ENCODE measurements at regions of chr20 and their contacts with region 1.

Region 1: GRCh38 chr20:34676642-34677373 is at the start of gene PIGU:
- DNase-seq: peak; percentile 97
- H3K4me3 Mint-ChIP-seq: peak within 1 kb of the TSS; percentile 97
- H3K27ac Mint-ChIP-seq: peak within 1 kb of the TSS; percentile 97
- H3K4me1 Mint-ChIP-seq: peaks cover 27% of the 10 kb centered on the region
- H3K27me3 Mint-ChIP-seq: no peaks in the 10 kb centered on the region
- total RNA-seq, gene PIGU: 24.8 and 25.9 TPM in 2 replicates

Region 2: DNA sequence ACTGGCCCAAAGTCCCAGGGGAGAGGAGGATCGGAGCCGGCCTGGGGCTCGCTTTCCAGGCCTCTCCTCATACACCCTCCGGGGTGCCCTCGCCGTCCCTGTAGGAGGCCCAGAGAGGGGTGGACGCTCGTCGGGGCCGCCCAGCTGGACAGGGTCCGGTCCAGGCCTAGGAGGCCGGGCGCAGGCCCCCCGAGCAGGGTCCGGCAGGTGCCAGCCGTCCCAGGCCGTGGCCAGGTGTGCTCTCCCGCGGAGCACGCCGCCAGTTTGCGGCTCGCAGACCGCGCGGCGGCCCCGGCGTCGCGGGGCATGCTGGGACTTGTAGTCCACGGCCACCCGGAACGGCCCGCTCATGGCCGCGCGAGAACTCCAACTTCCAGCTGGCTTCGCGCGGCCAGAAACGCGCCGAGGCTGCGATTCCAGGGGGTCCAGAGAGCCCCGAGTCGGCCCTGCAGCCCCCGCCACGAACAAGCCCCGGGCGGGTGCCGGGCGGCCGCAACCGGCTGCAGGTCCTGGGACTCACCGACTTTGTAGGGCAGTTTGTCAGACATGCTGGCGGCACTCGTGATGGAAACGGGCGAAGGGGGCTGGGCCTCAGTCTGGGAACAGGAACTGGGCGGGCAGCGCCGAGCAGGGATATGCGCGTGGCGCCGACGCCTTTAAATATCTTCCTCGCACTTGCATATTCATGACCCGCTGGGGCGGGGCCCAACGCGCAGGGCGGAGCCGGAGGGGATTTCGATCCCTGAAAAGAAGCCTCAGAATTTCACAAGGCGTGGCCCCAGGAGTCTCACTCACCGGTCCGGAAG is 373.9 kb before region 1 on chr20 and contains the start of gene AHCY:
- intact Hi-C with region 1: loop called (anchors 1 kb)
- DNase-seq: peak; percentile 93
- H3K4me3 Mint-ChIP-seq: peak within 1 kb of the TSS; percentile 83
- H3K27ac Mint-ChIP-seq: peak within 1 kb of the TSS; percentile 92
- H3K4me1 Mint-ChIP-seq: peaks cover 19% of the 10 kb centered on the region
- H3K27me3 Mint-ChIP-seq: no peaks in the 10 kb centered on the region
- total RNA-seq, gene AHCY: 130 and 132 TPM in 2 replicates

Region 3: GRCh38 chr20:34516247-34517113 is 160.3 kb before region 1 on chr20 and contains the start of gene DYNLRB1:
- intact Hi-C with region 1: loop called (anchors 1 kb)
- DNase-seq: peak; percentile 93
- H3K4me3 Mint-ChIP-seq: peak within 1 kb of the TSS; percentile 95
- H3K27ac Mint-ChIP-seq: peak within 1 kb of the TSS; percentile 96
- H3K4me1 Mint-ChIP-seq: peaks cover 35% of the 10 kb centered on the region
- H3K27me3 Mint-ChIP-seq: no peaks in the 10 kb centered on the region
- total RNA-seq, gene DYNLRB1: 92.0 and 104 TPM in 2 replicates

Region 4: GRCh38 chr20:34720266-34720665 is 43.5 kb after region 1 on chr20:
- intact Hi-C with region 1: loop called (anchors 1 kb)
- DNase-seq: no peak
- H3K4me3 Mint-ChIP-seq: no peak overlapping the region
- H3K27ac Mint-ChIP-seq: no peak overlapping the region
- H3K4me1 Mint-ChIP-seq: peaks cover 34% of the 10 kb centered on the region
- H3K27me3 Mint-ChIP-seq: no peaks in the 10 kb centered on the region

Region 5: DNA sequence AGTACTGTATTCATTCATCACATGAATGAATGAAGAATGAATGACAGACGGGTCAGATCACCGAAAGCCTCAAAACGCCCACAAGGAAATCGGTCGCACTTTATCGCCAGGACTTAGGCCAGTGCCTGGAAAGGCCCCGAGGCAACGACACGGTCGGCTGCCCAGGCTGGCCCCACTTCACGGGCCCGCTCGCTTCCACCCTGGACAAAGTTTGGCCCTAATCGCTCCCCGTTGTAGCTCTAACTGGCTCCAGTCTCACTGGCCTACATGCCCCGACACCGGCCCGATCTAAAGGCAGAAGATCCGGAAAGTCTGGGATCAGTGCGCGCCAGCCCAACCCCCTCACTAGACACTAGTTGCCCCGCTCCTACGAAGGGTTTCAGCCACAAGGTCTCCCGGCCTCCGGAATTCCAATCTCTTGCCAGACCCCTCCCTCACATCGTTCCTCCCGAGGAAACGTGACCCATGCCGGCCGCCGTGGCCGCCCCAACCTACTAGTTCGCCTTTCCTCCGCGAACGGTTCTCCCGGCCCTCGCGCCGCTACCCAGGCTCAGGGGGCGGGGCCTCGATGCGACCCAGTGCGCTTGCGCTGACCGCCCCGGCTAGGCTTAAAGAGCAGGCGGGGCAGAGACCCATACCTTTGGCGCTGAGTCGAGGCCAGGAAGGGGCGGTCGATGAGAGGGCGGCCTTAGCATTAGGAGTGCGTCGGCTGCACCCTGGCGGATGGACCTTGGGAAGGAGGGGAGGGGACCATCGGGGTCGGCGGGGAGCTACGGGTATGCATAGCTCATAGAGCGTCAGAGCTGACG is 278.6 kb after region 1 on chr20 and contains the starts of genes GSS and MYH7B:
- intact Hi-C with region 1: loop called (anchors 5 kb)
- DNase-seq: peak; percentile 97
- H3K4me3 Mint-ChIP-seq: peak within 1 kb of the TSS; percentile 94
- H3K27ac Mint-ChIP-seq: peak within 1 kb of the TSS; percentile 95
- H3K4me1 Mint-ChIP-seq: peaks cover 24% of the 10 kb centered on the region
- H3K27me3 Mint-ChIP-seq: peaks cover 3% of the 10 kb centered on the region
- total RNA-seq, gene GSS: 64.1 and 68.0 TPM in 2 replicates
- total RNA-seq, gene MYH7B: 0.20 and 0.44 TPM in 2 replicates

Measured in activated T-helper 1 cell treated with anti-CD3 and anti-CD28 coated beads, Interleukin-12 subunit alpha, Interleukin-12 subunit beta, Interleukin-2, Interleukin-4 antibody, amounts not matched to agents 30 ng/mL and 10 ng/mL and 1 ng/mL, durations not matched to agents 14 hours and 24 hours and 36 hours (primary cell).